ENCODE measurements at regions of chr6 and their contacts with region 1.

Region 1: GRCh38 chr6:143427109-143427817 is 23.2 kb downstream of the ADAT2 start:
- DNase-seq: peak; percentile 90

Region 2: GRCh38 chr6:142485256-142485655 is 942.0 kb before region 1 on chr6:
- intact Hi-C with region 1: loop called in 1 of 2 experiments (anchors 10 kb)
- DNase-seq: no peak

Region 3: GRCh38 chr6:142679907-142680700 is 747.2 kb before region 1 on chr6:
- intact Hi-C with region 1: loop called in 1 of 2 experiments (anchors 10 kb)
- DNase-seq: peak; percentile 81

Region 4: DNA sequence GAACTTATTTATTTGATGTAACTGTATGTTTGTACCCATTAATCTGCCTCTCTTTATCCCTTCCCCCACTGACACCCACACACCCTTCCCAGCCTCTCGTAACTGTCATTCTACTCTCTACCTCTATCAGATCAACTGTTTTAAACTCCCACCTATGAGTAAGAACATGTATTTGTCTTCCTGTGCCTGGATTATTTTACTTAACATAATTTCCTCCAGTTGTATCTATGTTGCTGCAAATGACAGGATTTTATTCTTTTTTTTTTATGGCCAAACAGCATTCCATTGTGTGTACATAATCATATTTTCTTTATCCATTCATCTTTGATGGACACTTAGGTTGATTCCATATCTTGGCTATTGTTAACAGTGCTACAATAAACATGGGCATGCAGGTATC is 299.8 kb after region 1 on chr6:
- intact Hi-C with region 1: no loop called
- DNase-seq: no peak